ENCODE measurements at regions of chr13 and their contacts with region 1.

Region 1: GRCh38 chr13:77480066-77480465 is 55.4 kb upstream of the SCEL start:
- DNase-seq: no peak
- ATAC-seq: no peak
- H3K4me3 ChIP-seq: no peak overlapping the region
- H3K27ac ChIP-seq: no peak overlapping the region
- H3K4me1 ChIP-seq: peaks cover 6% of the 10 kb centered on the region
- H3K27me3 ChIP-seq: no peaks in the 10 kb centered on the region
- CTCF ChIP-seq: no peak
- EP300 ChIP-seq: no peak
- POLR2A ChIP-seq: no peak
- RAD21 ChIP-seq: no peak

Region 2: GRCh38 chr13:77184455-77184854 is 295.6 kb before region 1 on chr13:
- CTCF ChIA-PET with region 1: interaction called, 12 read pairs
- POLR2A ChIA-PET with region 1: interaction called, 3 read pairs
- RAD21 ChIA-PET with region 1: interaction called, 14 read pairs
- SMC1A ChIA-PET with region 1: interaction called, 15 read pairs
- in situ Hi-C with region 1: no loop called
- intact Hi-C with region 1: no loop called
- DNase-seq: peak; percentile 87
- ATAC-seq: peak; percentile 94
- H3K4me3 ChIP-seq: no peak overlapping the region
- H3K27ac ChIP-seq: peak overlapping the region; percentile 64
- H3K4me1 ChIP-seq: peaks cover 12% of the 10 kb centered on the region
- H3K27me3 ChIP-seq: no peaks in the 10 kb centered on the region
- CTCF ChIP-seq: no peak
- EP300 ChIP-seq: peak in 1 of 2 experiments; percentile 68; a peak in 2 of 4 replicates
- POLR2A ChIP-seq: no peak
- RAD21 ChIP-seq: no peak

Region 3: GRCh38 chr13:77265336-77265735 is 214.7 kb before region 1 on chr13:
- CTCF ChIA-PET with region 1: interaction called, 7 read pairs
- POLR2A ChIA-PET with region 1: interaction called, 3 read pairs
- RAD21 ChIA-PET with region 1: interaction called, 15 read pairs
- SMC1A ChIA-PET with region 1: interaction called, 26 read pairs
- in situ Hi-C with region 1: no loop called
- intact Hi-C with region 1: no loop called
- DNase-seq: no peak
- ATAC-seq: no peak
- H3K4me3 ChIP-seq: no peak overlapping the region
- H3K27ac ChIP-seq: no peak overlapping the region
- H3K4me1 ChIP-seq: no peaks in the 10 kb centered on the region
- H3K27me3 ChIP-seq: no peaks in the 10 kb centered on the region
- CTCF ChIP-seq: no peak
- EP300 ChIP-seq: no peak
- POLR2A ChIP-seq: no peak
- RAD21 ChIP-seq: no peak

Region 4: GRCh38 chr13:77310579-77311279 is 169.3 kb before region 1 on chr13:
- CTCF ChIA-PET with region 1: interaction called, 5 read pairs
- POLR2A ChIA-PET with region 1: no interaction called
- RAD21 ChIA-PET with region 1: interaction called, 8 read pairs
- SMC1A ChIA-PET with region 1: interaction called, 17 read pairs
- in situ Hi-C with region 1: no loop called
- intact Hi-C with region 1: no loop called
- DNase-seq: no peak
- ATAC-seq: no peak
- H3K4me3 ChIP-seq: no peak overlapping the region
- H3K27ac ChIP-seq: no peak overlapping the region
- H3K4me1 ChIP-seq: peaks cover 15% of the 10 kb centered on the region
- H3K27me3 ChIP-seq: no peaks in the 10 kb centered on the region
- CTCF ChIP-seq: no peak
- EP300 ChIP-seq: no peak
- POLR2A ChIP-seq: no peak
- RAD21 ChIP-seq: no peak

Region 5: GRCh38 chr13:77374786-77375185 is 105.3 kb before region 1 on chr13:
- CTCF ChIA-PET with region 1: interaction called, 5 read pairs
- POLR2A ChIA-PET with region 1: no interaction called
- RAD21 ChIA-PET with region 1: interaction called, 4 read pairs
- SMC1A ChIA-PET with region 1: interaction called, 11 read pairs
- in situ Hi-C with region 1: no loop called
- intact Hi-C with region 1: no loop called
- DNase-seq: no peak
- ATAC-seq: peak; percentile 83
- H3K4me3 ChIP-seq: no peak overlapping the region
- H3K27ac ChIP-seq: no peak overlapping the region
- H3K4me1 ChIP-seq: no peaks in the 10 kb centered on the region
- H3K27me3 ChIP-seq: no peaks in the 10 kb centered on the region
- CTCF ChIP-seq: no peak
- EP300 ChIP-seq: no peak
- POLR2A ChIP-seq: no peak
- RAD21 ChIP-seq: no peak

Region 6: GRCh38 chr13:77460195-77460594 is 19.9 kb before region 1 on chr13:
- CTCF ChIA-PET with region 1: interaction called, 18 read pairs
- POLR2A ChIA-PET with region 1: interaction called, 3 read pairs
- RAD21 ChIA-PET with region 1: interaction called, 9 read pairs
- SMC1A ChIA-PET with region 1: interaction called, 35 read pairs
- in situ Hi-C with region 1: no loop called
- intact Hi-C with region 1: no loop called
- DNase-seq: peak; percentile 26
- ATAC-seq: peak; percentile 99
- H3K4me3 ChIP-seq: no peak overlapping the region
- H3K27ac ChIP-seq: no peak overlapping the region
- H3K4me1 ChIP-seq: peaks cover 3% of the 10 kb centered on the region; the same call in 1 of the 2 replicates
- H3K27me3 ChIP-seq: no peaks in the 10 kb centered on the region
- CTCF ChIP-seq: no peak
- EP300 ChIP-seq: no peak
- POLR2A ChIP-seq: no peak
- RAD21 ChIP-seq: no peak